Left lung (tissue), 14 donors: ENCODE measurements at regions of chr2 and their contacts with region 1.

Region 1: DNA sequence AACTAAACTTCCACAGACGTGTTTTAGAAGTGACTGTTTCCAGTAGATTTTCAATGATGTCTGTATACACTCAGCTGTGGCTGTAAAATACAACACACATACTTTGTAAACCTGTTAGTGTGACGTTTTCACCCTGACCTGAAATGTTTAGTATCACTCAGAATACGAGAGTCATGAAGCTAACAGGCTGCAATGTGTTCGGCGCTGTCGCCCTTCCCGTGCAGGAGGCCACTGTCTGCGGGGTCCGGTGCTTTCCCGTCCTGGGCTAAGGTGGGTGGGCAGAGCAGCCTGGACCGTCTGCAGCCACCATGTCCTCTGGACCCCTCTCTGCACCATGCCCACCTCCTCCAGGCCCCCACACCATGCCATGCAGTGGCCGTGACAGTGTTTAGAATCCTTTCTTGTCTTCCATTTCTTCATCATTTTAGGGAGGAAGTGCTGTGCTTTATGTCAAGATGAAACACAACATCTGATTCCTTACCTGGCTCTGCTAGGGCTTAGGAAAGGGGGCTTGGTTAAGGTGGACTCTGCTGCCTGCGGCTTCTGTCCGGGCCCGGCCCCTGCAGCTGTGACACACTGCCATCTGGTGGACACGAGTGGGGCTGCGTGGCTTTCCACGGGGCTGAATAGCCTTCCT is 53.8 kb upstream of the RBM44 start:
- DNase-seq: peak; percentile 62 to 94 (median 74)
- ATAC-seq: peak; percentile 91
- H3K4me3 ChIP-seq: no peak overlapping the region
- H3K27ac ChIP-seq: peak overlapping the region in 1 of 2 donors; percentile 53
- H3K4me1 ChIP-seq: peaks cover 0 to 60% of the 10 kb centered on the region in 2 donors
- H3K27me3 ChIP-seq: no peaks in the 10 kb centered on the region
- CTCF ChIP-seq: peak; percentile 94 to 97

Region 2: DNA sequence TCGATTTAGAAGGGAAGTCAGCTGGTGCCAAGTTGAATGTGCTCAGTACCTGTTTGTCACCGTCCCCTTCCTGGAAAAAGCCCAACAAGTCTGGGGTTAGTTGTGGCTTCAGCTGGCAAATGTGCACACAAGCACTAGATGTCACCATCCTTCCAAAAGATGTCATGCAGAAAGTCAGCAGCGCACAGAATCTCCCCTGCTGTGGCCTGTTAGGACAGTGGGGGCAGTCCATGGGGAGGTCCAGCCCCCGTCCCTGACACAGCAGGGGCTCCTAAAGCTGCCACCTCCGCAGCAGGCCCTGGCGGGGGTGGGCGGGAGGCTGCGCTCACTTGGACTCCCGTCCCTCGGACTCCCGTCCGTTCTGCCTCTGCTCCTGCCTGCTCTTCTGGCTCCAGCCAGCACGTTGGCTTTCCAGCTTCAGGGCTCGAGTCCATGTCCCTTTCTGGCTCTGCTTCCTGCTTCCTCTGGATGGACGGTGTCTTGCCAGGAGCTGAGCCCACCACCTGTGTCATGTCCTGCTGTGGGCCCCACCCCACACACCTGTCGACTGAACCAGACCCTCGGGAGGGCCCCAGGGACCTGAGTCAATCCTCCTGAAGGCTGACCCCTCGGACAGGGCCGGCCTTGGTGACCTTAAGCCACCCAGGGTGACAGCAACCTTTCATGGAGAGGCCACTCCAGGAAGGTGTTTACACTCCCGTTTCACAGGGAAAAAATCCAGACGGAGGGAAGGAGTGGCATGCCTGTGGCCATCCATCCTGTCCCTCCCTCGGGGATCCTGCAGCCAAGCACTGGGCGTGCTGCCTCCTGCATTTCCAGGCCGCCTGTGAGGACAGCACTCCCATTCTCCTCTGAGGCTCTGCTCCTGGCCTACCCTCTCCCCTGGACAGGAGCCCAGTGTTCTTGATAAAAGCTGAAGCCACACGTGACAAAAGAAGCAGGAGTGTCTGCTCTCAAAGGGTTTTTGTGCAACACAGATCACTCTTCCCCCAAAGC is 162.7 kb before region 1 on chr2:
- intact Hi-C with region 1: loop called in 1 of 2 experiments (anchors 10 kb)
- DNase-seq: peak; percentile 58 to 79 (median 72)
- ATAC-seq: peak; percentile 87
- H3K4me3 ChIP-seq: no peak overlapping the region
- H3K27ac ChIP-seq: peak overlapping the region; percentile 20 to 33
- H3K4me1 ChIP-seq: peaks cover 0 to 11% of the 10 kb centered on the region in 2 donors
- H3K27me3 ChIP-seq: no peaks in the 10 kb centered on the region
- CTCF ChIP-seq: peak; percentile 23 to 26

Region 3: GRCh38 chr2:237674731-237675276 is 69.9 kb before region 1 on chr2:
- intact Hi-C with region 1: loop called in 1 of 2 experiments (anchors 5 kb)
- DNase-seq: peak; percentile 78 to 96 (median 94)
- ATAC-seq: peak; percentile 90
- H3K4me3 ChIP-seq: peak overlapping the region in 1 of 2 donors; percentile 24
- H3K27ac ChIP-seq: peak overlapping the region; percentile 72 to 97
- H3K4me1 ChIP-seq: peaks cover 52 to 71% of the 10 kb centered on the region in 2 donors
- H3K27me3 ChIP-seq: no peaks in the 10 kb centered on the region
- CTCF ChIP-seq: peak in 1 of 2 donors; percentile 31

Region 4: GRCh38 chr2:237691908-237692600 is 52.7 kb before region 1 on chr2:
- intact Hi-C with region 1: loop called in 1 of 2 experiments (anchors 10 kb)
- DNase-seq: peak in 3 of 4 donors; percentile 92 to 100 (median 98)
- ATAC-seq: peak; percentile 74
- H3K4me3 ChIP-seq: peak overlapping the region; percentile 78 to 83
- H3K27ac ChIP-seq: peak overlapping the region; percentile 96 to 100
- H3K4me1 ChIP-seq: peaks cover 48 to 80% of the 10 kb centered on the region in 2 donors
- H3K27me3 ChIP-seq: no peaks in the 10 kb centered on the region
- CTCF ChIP-seq: no peak